PC-3 (cell line): ENCODE measurements at regions of chr2 and their contacts with region 1.

Region 1: GRCh38 chr2:219029829-219030165 is 11.5 kb downstream of the CFAP65 start:
- DNase-seq: peak; percentile 90
- ATAC-seq: peak; percentile 97
- H3K4me3 ChIP-seq: no peak overlapping the region
- H3K27ac ChIP-seq: no peak overlapping the region
- H3K4me1 ChIP-seq: no peaks in the 10 kb centered on the region
- H3K27me3 ChIP-seq: no peaks in the 10 kb centered on the region
- CTCF ChIP-seq: peak; percentile 95

Region 2: GRCh38 chr2:219057709-219058540 is 28.1 kb after region 1 on chr2:
- CTCF ChIA-PET with region 1: interaction called, 5 read pairs
- POLR2A ChIA-PET with region 1: no interaction called
- intact Hi-C with region 1: loop called (anchors 5 kb)
- DNase-seq: peak; percentile 72
- ATAC-seq: peak; percentile 67
- H3K4me3 ChIP-seq: no peak overlapping the region
- H3K27ac ChIP-seq: no peak overlapping the region
- H3K4me1 ChIP-seq: peaks cover 22% of the 10 kb centered on the region
- H3K27me3 ChIP-seq: peaks cover 46% of the 10 kb centered on the region
- CTCF ChIP-seq: peak; percentile 87

Region 3: GRCh38 chr2:219104107-219105035 is 74.6 kb after region 1 on chr2:
- CTCF ChIA-PET with region 1: interaction called, 25 read pairs
- POLR2A ChIA-PET with region 1: no interaction called
- intact Hi-C with region 1: no loop called
- DNase-seq: peak; percentile 68
- ATAC-seq: peak; percentile 65
- H3K4me3 ChIP-seq: no peak overlapping the region
- H3K27ac ChIP-seq: no peak overlapping the region
- H3K4me1 ChIP-seq: no peaks in the 10 kb centered on the region
- H3K27me3 ChIP-seq: no peaks in the 10 kb centered on the region
- CTCF ChIP-seq: peak; percentile 91

Region 4: GRCh38 chr2:219119422-219120043 is 89.7 kb after region 1 on chr2:
- CTCF ChIA-PET with region 1: interaction called, 29 read pairs
- POLR2A ChIA-PET with region 1: no interaction called
- intact Hi-C with region 1: loop called (anchors 1 kb)
- DNase-seq: peak; percentile 72
- ATAC-seq: peak; percentile 78
- H3K4me3 ChIP-seq: no peak overlapping the region
- H3K27ac ChIP-seq: no peak overlapping the region
- H3K4me1 ChIP-seq: peaks cover 25% of the 10 kb centered on the region
- H3K27me3 ChIP-seq: no peaks in the 10 kb centered on the region
- CTCF ChIP-seq: peak; percentile 93

Region 5: DNA sequence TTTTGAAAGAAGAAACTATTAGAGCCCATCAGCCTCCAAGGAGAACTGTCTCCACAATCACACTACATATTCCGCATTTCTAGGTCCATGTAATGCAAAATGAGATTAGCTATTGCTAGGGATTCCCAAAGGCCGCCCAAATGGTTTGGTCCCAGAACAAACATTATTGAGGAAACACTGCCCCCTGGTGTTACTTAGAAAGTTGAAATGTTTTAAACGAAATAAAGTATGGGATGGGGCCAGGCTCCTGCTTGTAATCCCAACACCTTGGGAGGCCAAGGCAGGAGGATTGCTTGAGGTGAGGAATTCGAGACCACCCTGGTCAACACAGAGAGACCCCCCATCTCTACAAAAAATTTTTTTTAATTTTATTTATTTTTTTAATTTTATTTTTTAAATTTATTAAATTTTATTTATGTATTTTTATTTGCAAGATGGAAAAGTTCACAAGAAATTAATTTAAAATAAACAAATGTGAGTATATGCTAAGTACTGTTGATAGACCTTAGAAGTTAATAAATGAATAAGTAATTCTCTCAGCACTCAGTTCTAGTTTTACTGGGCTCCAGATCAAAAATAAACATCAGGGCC is 125.4 kb after region 1 on chr2:
- CTCF ChIA-PET with region 1: interaction called, 27 read pairs
- POLR2A ChIA-PET with region 1: no interaction called
- intact Hi-C with region 1: loop called (anchors 1 kb)
- DNase-seq: peak; percentile 89
- ATAC-seq: peak; percentile 44
- H3K4me3 ChIP-seq: no peak overlapping the region
- H3K27ac ChIP-seq: no peak overlapping the region
- H3K4me1 ChIP-seq: peaks cover 19% of the 10 kb centered on the region
- H3K27me3 ChIP-seq: no peaks in the 10 kb centered on the region
- CTCF ChIP-seq: peak; percentile 65